Aorta (tissue), 5 donors: ENCODE measurements at regions of chr12 and their contacts with region 1.

Region 1: DNA sequence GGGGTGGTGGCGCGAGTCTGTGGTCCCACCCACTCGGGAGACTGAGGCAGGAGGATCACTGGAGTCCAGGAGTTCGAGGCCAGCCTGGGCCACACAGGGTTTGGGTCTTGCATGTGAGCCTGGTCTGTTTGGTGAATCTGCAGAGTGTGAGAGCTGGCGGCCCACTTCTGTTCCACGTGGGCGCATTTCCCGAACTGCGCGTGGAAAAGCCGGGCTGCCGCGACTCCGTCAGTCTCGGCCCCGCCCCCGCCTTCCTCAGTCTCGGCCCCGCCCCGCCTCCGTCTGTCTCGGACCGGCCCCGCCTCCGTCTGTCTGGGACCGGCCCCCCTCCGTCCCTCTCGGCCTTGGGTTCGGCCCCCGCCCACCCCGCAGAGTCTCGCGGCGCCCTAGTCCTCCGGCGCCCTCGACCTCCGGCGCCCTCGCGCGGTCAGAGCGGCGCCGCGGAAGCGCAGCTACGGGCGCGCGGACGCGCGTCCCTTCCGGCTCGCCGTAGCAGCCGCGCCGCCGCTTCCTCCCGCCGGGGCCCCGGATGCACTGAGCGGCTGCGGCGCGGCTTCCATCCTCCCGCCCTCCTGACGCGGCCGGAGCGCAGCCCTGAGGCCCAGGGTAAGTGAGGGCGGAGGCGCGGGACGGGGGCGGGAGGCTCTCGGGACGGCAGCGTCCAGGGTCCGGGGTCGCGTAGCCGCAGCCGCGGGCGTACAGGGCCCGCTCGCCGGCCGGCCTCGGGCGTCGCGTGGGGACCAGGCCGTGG is at the start of gene EP400:
- DNase-seq: peak; percentile 98 to 99
- ATAC-seq: peak; percentile 99
- H3K4me3 ChIP-seq: peak within 1 kb of the TSS; percentile 84 to 90
- H3K27ac ChIP-seq: peak within 1 kb of the TSS; percentile 24 to 82
- H3K4me1 ChIP-seq: no peaks in the 10 kb centered on the region
- H3K27me3 ChIP-seq: no peaks in the 10 kb centered on the region
- total RNA-seq, gene EP400: 39.9 to 52.9 TPM

Region 2: GRCh38 chr12:131621701-131622421 is 327.7 kb before region 1 on chr12:
- intact Hi-C with region 1: no loop called
- DNase-seq: no peak
- ATAC-seq: peak; percentile 46
- H3K4me3 ChIP-seq: no peak overlapping the region
- H3K27ac ChIP-seq: no peak overlapping the region
- H3K4me1 ChIP-seq: no peaks in the 10 kb centered on the region
- H3K27me3 ChIP-seq: no peaks in the 10 kb centered on the region

Region 3: DNA sequence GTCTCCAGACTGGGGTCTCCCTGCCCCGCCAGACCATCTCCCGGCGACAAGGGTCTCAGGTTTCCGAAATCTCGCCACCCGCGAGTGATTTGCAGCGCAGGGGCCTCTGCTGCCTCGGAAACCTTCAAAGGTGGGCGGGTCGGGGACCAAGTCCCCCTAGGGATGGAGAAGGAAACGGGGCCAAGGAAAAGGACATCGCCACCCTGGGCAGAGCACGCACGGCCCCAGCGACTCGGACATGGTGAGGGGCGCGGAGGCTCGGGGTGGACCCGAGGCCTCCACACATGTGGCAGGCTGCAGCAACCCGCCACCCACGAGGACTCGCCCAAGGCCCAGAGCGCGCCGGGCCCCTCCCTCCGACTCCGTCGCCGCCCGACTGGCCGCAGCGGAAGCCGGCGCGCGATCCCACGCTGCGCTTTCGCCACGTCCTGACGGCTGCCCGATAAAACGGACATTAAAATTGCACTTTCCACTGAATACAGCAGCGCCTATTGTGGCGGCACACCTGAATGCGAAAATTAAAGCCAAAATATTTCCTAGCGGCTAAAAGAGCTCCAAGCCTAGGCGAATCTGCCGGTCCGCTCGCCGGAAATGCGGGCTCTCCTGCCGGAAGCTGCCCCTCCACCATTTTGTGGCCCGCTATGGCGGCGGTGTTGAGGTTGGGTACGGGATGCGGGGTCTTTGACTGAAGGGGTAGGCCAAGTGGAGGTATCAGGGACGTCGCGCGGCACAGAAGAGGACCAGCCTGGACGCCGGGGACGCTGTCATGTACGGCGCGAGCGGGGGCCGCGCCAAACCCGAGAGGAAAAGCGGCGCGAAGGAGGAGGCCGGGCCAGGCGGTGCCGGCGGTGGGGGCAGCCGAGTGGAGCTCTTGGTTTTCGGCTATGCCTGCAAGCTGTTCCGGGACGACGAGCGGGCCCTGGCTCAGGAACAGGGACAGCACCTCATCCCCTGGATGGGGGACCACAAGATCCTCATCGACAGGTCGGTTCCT is 238.8 kb before region 1 on chr12 and contains the start of gene SFSWAP:
- intact Hi-C with region 1: loop called in 1 of 2 experiments (anchors 10 kb)
- DNase-seq: peak; percentile 81 to 92
- ATAC-seq: peak; percentile 96
- H3K4me3 ChIP-seq: peak within 1 kb of the TSS; percentile 58 to 83
- H3K27ac ChIP-seq: peak within 1 kb of the TSS in 1 of 2 donors; percentile 24
- H3K4me1 ChIP-seq: no peaks in the 10 kb centered on the region
- H3K27me3 ChIP-seq: no peaks in the 10 kb centered on the region
- total RNA-seq, gene SFSWAP: 43.7 to 72.3 TPM

Region 4: DNA sequence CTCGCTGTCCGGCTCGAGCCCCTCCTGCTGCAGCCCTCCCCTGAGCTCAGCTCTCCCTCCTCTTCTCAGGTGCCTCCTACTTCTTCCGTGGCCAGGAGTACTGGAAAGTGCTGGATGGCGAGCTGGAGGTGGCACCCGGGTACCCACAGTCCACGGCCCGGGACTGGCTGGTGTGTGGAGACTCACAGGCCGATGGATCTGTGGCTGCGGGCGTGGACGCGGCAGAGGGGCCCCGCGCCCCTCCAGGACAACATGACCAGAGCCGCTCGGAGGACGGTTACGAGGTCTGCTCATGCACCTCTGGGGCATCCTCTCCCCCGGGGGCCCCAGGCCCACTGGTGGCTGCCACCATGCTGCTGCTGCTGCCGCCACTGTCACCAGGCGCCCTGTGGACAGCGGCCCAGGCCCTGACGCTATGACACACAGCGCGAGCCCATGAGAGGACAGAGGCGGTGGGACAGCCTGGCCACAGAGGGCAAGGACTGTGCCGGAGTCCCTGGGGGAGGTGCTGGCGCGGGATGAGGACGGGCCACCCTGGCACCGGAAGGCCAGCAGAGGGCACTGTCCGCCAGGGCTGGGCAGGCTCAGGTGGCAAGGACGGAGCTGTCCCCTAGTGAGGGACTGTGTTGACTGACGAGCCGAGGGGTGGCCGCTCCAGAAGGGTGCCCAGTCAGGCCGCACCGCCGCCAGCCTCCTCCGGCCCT is 98.6 kb before region 1 on chr12:
- intact Hi-C with region 1: loop called in 1 of 2 experiments (anchors 5 kb)
- DNase-seq: peak in 1 of 2 donors; percentile 77
- ATAC-seq: peak; percentile 74
- H3K4me3 ChIP-seq: no peak overlapping the region
- H3K27ac ChIP-seq: no peak overlapping the region
- H3K4me1 ChIP-seq: no peaks in the 10 kb centered on the region
- H3K27me3 ChIP-seq: no peaks in the 10 kb centered on the region

Region 5: DNA sequence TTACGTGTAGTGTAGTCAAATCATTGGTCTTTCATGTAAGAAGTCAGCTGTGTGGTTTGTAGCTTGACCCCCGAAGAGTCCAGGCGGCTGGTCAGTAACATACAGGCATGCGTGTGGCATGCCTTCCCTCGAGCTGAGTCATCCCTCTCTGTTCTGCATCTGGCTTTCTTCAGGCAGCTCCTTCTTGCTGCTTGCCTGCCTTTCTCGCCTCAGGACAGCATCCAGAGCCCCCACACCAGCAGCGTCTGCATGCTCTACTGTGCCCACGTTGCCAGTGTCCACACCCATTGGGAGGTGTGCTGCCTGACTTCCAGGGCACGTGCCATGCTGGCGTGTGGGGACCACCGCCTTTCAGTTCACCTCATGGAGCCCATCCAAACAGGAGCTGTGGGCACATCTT is 97.0 kb after region 1 on chr12:
- intact Hi-C with region 1: no loop called
- DNase-seq: no peak
- ATAC-seq: no peak
- H3K4me3 ChIP-seq: no peak overlapping the region
- H3K27ac ChIP-seq: no peak overlapping the region
- H3K4me1 ChIP-seq: no peaks in the 10 kb centered on the region
- H3K27me3 ChIP-seq: no peaks in the 10 kb centered on the region